ENCODE measurements at regions of chr12 and their contacts with region 1.

Region 1: DNA sequence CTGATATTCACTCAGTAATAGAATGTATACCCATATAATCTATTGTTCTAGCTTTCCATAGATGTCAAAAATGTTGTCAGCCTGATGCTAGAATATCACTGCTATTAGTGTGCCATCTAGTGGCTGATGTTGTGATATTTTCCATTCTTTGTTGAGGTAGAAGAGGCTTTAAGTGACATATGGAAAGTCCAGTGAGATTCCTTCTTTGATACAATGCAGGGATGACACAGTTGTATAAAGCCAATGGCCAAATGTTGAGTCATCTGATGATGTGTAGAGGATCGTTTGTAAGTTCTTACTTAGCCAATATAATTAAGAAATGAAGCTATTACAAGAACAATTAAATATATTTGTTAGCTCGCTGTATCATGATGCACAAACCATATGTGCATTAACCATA is 58.1 kb upstream of the PCED1B start:
- DNase-seq: peak; percentile 16
- ATAC-seq: peak; percentile 70
- H3K4me3 Mint-ChIP-seq: no peak overlapping the region
- H3K27ac Mint-ChIP-seq: no peak overlapping the region
- H3K4me1 Mint-ChIP-seq: peaks cover 4% of the 10 kb centered on the region
- H3K27me3 Mint-ChIP-seq: peaks cover 10% of the 10 kb centered on the region
- CTCF ChIP-seq: peak; percentile 81

Region 2: DNA sequence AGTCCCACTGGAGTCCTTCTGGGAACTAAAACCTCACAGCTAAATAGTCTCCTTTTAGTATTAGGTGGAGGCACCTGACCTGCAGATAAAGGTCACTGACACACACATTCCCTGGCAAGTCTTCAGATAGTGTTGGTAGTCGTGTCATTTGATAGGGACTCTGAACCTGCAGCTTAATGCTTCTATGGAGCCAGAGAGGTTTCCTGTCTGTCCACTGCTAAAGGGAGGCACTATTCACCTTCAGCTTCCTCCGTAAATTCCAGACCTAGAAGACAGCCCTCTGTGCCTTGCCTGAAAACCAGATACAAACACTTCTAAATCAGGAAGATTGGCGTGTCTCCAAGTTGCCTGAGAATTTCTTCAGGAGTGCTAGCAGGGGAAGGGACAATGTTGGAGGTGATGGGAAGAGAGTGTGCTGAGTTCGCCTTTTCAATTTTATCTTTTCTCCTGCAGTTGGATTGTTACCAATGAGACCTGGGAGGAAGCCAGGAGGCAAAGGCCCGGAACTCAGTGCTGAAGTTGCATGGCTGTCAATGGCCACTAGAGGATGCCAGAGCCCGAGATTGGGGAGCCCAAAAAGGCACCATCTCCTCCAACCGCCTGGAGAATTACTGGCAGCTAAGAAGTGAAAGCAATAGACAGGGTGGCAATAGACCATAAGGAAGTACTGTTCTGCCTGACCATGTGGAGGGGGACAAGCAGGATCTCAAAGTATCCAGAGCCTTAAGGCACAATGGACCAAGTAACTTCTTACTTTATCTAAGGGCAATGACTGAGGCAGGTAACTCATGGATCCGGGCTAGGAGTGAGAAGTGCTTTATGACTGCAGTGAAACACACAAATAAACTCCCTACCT is 949.3 kb before region 1 on chr12:
- CTCF ChIA-PET with region 1: interaction called, 12 read pairs
- POLR2A ChIA-PET with region 1: no interaction called
- intact Hi-C with region 1: no loop called
- DNase-seq: peak; percentile 73
- ATAC-seq: peak; percentile 96
- H3K4me3 Mint-ChIP-seq: no peak overlapping the region
- H3K27ac Mint-ChIP-seq: no peak overlapping the region
- H3K4me1 Mint-ChIP-seq: no peaks in the 10 kb centered on the region
- H3K27me3 Mint-ChIP-seq: peaks cover 1% of the 10 kb centered on the region
- CTCF ChIP-seq: peak; percentile 92

Region 3: DNA sequence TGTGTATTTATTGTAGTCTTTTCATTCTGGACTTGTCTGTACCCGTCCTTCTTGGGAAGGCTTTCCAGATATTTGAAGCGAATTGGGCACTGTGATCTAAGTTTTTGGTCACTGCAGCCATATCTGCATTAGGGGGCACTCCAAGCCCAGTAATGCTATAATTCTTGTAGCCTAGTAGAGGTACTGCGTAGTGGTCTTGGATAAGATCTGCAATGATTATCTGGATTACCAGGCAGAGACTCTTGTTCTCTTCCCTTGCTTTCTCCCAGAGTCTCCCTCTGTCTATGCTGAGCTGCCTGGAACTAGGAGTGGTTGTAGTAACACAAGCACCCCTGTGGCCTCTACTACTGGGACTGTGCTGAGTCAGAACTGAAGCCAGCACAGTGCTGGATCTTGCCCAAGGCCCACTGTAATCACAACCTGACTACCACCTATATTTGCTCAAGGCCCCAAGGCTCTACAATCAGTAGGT is 678.7 kb before region 1 on chr12:
- CTCF ChIA-PET with region 1: interaction called, 5 read pairs
- POLR2A ChIA-PET with region 1: no interaction called
- intact Hi-C with region 1: loop called (anchors 5 kb)
- DNase-seq: peak; percentile 41
- ATAC-seq: peak; percentile 82
- H3K4me3 Mint-ChIP-seq: no peak overlapping the region
- H3K27ac Mint-ChIP-seq: no peak overlapping the region
- H3K4me1 Mint-ChIP-seq: peaks cover 6% of the 10 kb centered on the region
- H3K27me3 Mint-ChIP-seq: peaks cover 2% of the 10 kb centered on the region
- CTCF ChIP-seq: peak; percentile 57

Region 4: GRCh38 chr12:46926526-46926925 is 94.8 kb before region 1 on chr12:
- CTCF ChIA-PET with region 1: no interaction called
- POLR2A ChIA-PET with region 1: no interaction called
- intact Hi-C with region 1: no loop called
- DNase-seq: no peak
- ATAC-seq: no peak
- H3K4me3 Mint-ChIP-seq: no peak overlapping the region
- H3K27ac Mint-ChIP-seq: no peak overlapping the region
- H3K4me1 Mint-ChIP-seq: no peaks in the 10 kb centered on the region
- H3K27me3 Mint-ChIP-seq: peaks cover 10% of the 10 kb centered on the region
- CTCF ChIP-seq: no peak

Region 5: GRCh38 chr12:47071241-47071852 is 50.0 kb after region 1 on chr12:
- CTCF ChIA-PET with region 1: interaction called, 12 read pairs
- POLR2A ChIA-PET with region 1: no interaction called
- intact Hi-C with region 1: no loop called
- DNase-seq: no peak
- ATAC-seq: no peak
- H3K4me3 Mint-ChIP-seq: no peak overlapping the region
- H3K27ac Mint-ChIP-seq: no peak overlapping the region
- H3K4me1 Mint-ChIP-seq: peaks cover 24% of the 10 kb centered on the region
- H3K27me3 Mint-ChIP-seq: no peaks in the 10 kb centered on the region
- CTCF ChIP-seq: peak; percentile 76

Region 6: GRCh38 chr12:47085815-47086252 is 64.5 kb after region 1 on chr12:
- CTCF ChIA-PET with region 1: no interaction called
- POLR2A ChIA-PET with region 1: no interaction called
- intact Hi-C with region 1: no loop called
- DNase-seq: peak; percentile 66
- ATAC-seq: peak; percentile 87
- H3K4me3 Mint-ChIP-seq: peak overlapping the region; percentile 28
- H3K27ac Mint-ChIP-seq: peak overlapping the region; percentile 82
- H3K4me1 Mint-ChIP-seq: peaks cover 59% of the 10 kb centered on the region
- H3K27me3 Mint-ChIP-seq: no peaks in the 10 kb centered on the region
- CTCF ChIP-seq: no peak

Region 7: GRCh38 chr12:47207340-47207717 is 186.0 kb after region 1 on chr12:
- CTCF ChIA-PET with region 1: no interaction called
- POLR2A ChIA-PET with region 1: no interaction called
- intact Hi-C with region 1: no loop called
- DNase-seq: peak; percentile 76
- ATAC-seq: peak; percentile 60
- H3K4me3 Mint-ChIP-seq: peak overlapping the region; percentile 79
- H3K27ac Mint-ChIP-seq: peak overlapping the region; percentile 96
- H3K4me1 Mint-ChIP-seq: peaks cover 69% of the 10 kb centered on the region
- H3K27me3 Mint-ChIP-seq: no peaks in the 10 kb centered on the region
- CTCF ChIP-seq: no peak